Sciatic nerve (tissue), 2 donors: ENCODE measurements at regions of chr11 and their contacts with region 1.

Region 1: GRCh38 chr11:32960553-32961164 is 55.0 kb upstream of the DEPDC7 start:
- DNase-seq: no peak
- ATAC-seq: no peak

Region 2: GRCh38 chr11:33065445-33066178 is 105.0 kb after region 1 on chr11:
- intact Hi-C with region 1: loop called (anchors 10 kb)
- DNase-seq: peak; percentile 79
- ATAC-seq: peak; percentile 86